Ascending aorta (tissue), 2 donors: ENCODE measurements at regions of chr19 and their contacts with region 1.

Region 1: DNA sequence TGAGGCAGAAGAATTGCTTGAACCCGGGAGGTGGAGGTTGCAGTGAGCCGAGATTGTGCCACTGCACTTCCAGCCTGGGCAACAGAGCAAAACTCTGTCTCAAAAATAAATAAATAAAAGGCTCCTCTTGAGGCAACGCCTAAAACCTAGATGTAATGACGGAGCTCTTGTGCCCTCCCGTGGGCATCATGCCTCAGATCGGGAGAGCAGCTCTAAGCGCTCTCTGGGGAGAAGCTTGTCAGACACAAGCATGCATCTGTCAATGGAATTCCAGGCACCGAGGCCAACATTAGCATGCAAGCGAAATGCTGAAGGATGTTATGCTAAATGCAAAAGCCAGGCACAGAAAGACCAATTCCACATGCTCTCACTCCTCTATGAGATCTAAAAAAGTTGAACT is 45.6 kb upstream of the MRI1 start:
- DNase-seq: no peak
- H3K4me3 ChIP-seq: no peak overlapping the region
- H3K27ac ChIP-seq: no peak overlapping the region
- H3K4me1 ChIP-seq: peaks cover 0 to 3% of the 10 kb centered on the region in 2 donors
- H3K27me3 ChIP-seq: no peaks in the 10 kb centered on the region
- CTCF ChIP-seq: peak; percentile 20 to 49 (median 27)

Region 2: GRCh38 chr19:13277104-13277809 is 441.5 kb before region 1 on chr19:
- intact Hi-C with region 1: loop called (anchors 2 kb)
- DNase-seq: peak in 1 of 2 donors; percentile 75
- H3K4me3 ChIP-seq: no peak overlapping the region
- H3K27ac ChIP-seq: no peak overlapping the region
- H3K4me1 ChIP-seq: no peaks in the 10 kb centered on the region
- H3K27me3 ChIP-seq: no peaks in the 10 kb centered on the region
- CTCF ChIP-seq: peak; percentile 56 to 81 (median 76)

Region 3: DNA sequence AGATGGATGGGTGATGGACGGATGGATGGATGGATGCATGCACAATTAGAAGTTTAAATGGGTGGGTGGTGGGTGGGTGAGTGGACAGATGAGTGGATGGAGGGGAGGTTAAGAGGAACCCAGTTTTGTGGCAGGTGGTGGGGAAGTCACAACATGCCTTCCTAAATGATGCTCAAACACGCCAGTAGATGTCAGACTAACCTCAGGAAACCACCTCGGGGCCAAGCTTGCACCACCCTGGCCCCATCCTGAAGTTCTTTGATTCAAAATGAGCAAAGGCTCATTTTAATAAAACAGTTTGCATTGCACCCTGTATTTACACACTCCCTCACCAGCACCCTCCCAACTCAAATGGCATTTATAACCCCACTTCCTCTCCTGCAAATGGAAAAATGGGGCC is 121.1 kb before region 1 on chr19:
- intact Hi-C with region 1: loop called (anchors 1 kb)
- DNase-seq: peak in 1 of 2 donors; percentile 64
- H3K4me3 ChIP-seq: no peak overlapping the region
- H3K27ac ChIP-seq: no peak overlapping the region
- H3K4me1 ChIP-seq: no peaks in the 10 kb centered on the region
- H3K27me3 ChIP-seq: no peaks in the 10 kb centered on the region
- CTCF ChIP-seq: peak; percentile 54 to 61 (median 60)